Left ventricle myocardium superior (tissue), 1 donor: ENCODE measurements at regions of chr5 and their contacts with region 1.

Region 1: GRCh38 chr5:112146323-112147226 is 272.5 kb downstream of the EPB41L4A start:
- DNase-seq: no peak
- ATAC-seq: peak; percentile 86

Region 2: DNA sequence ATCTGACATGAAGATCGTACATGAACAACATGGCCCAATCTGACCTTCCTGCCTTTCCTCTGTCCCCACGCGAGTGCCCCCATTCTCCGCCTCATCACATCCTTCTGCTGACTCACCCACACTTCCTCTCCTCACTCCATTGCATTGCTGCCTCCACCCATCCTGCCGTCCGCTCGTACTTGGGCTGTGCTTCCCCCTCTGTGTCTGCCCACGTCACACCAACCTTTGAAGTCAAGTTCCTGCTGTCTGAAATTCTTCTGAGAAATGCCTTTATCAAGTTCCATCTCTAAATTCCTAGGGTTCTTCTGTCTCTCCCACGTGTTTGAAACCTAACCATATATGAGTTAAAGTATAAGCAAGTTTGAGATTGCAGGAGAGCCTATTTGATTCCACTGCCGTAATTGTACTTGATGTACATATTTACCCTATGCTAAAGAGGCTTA is 616.3 kb before region 1 on chr5:
- intact Hi-C with region 1: loop called (anchors 5 kb)
- DNase-seq: peak; percentile 68
- ATAC-seq: peak; percentile 94